Endothelial cell of umbilical vein (primary cell): ENCODE measurements at regions of chr6 and their contacts with region 1.

Region 1: GRCh38 chr6:102204356-102204755 is 810.8 kb downstream of the GRIK2 start:
- DNase-seq: no peak
- H3K4me3 ChIP-seq: no peak overlapping the region
- H3K27ac ChIP-seq: no peak overlapping the region
- H3K4me1 ChIP-seq: no peaks in the 10 kb centered on the region
- H3K27me3 ChIP-seq: no peaks in the 10 kb centered on the region
- CTCF ChIP-seq: no peak
- POLR2A ChIP-seq: no peak

Region 2: GRCh38 chr6:102215425-102215824 is 11.1 kb after region 1 on chr6:
- CTCF ChIA-PET with region 1: no interaction called
- POLR2A ChIA-PET with region 1: no interaction called
- dilution Hi-C with region 1: no loop called
- intact Hi-C with region 1: no loop called
- DNase-seq: no peak
- H3K4me3 ChIP-seq: no peak overlapping the region
- H3K27ac ChIP-seq: no peak overlapping the region
- H3K4me1 ChIP-seq: no peaks in the 10 kb centered on the region
- H3K27me3 ChIP-seq: no peaks in the 10 kb centered on the region
- CTCF ChIP-seq: no peak
- POLR2A ChIP-seq: no peak

Region 3: DNA sequence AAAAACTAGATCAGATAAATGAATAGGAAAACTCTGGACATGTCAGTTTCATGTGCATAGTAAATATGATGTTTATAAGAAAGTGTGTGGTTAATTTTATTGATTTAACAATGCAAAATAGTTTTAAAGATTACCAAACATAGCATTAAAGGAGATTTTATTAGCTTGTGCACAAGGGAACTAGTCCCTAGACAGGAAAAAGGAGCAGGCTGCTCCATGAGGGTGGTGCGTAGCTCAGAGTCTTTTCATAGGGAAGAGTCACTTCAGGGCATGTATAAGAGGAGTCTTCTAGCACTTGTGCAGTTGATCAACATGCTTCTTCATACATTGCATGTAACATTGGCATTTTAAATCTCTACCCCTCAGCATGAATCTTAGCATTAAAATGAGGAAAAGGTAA is 24.9 kb after region 1 on chr6:
- CTCF ChIA-PET with region 1: no interaction called
- POLR2A ChIA-PET with region 1: no interaction called
- dilution Hi-C with region 1: no loop called
- intact Hi-C with region 1: loop called (anchors 1 kb)
- DNase-seq: no peak
- H3K4me3 ChIP-seq: no peak overlapping the region
- H3K27ac ChIP-seq: no peak overlapping the region
- H3K4me1 ChIP-seq: no peaks in the 10 kb centered on the region
- H3K27me3 ChIP-seq: no peaks in the 10 kb centered on the region
- CTCF ChIP-seq: no peak
- POLR2A ChIP-seq: no peak